ENCODE measurements at regions of chr1 and their contacts with region 1.

Region 1: DNA sequence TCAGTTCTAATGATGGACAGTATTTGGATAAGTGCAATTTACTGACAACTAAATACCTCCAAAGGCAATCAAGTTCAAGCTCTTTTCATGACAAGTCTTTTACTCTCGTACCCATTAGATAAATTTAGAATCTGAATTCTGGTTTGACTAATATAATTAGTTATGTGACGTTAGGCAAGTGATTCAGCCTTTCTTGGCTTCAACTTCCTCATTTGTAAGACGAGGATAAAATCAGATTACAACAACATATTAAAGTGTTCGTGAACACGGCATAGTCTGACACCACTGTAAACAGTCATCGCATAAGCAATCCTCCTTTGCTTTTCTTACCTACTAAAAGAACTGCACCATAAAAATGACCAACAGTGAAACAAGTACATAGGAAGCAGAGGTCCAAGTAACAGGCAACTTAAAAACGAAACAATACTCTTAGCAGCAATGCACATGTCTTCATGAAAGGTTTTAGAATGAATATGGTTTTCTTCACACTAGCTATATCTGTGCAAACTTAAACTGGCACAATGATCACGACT is 25.7 kb downstream of the COA6 start:
- DNase-seq: no peak
- ATAC-seq: peak; percentile 68
- H3K4me3 ChIP-seq: peak overlapping the region; percentile 2
- H3K4me3 Mint-ChIP-seq: peak overlapping the region; percentile 30 to 89 (median 80)
- H3K27ac ChIP-seq: peak overlapping the region; percentile 61
- H3K27ac Mint-ChIP-seq: peak overlapping the region; percentile 86 to 97 (median 92)
- H3K4me1 ChIP-seq: peaks cover 11 to 25% of the 10 kb centered on the region in 2 donors
- H3K4me1 Mint-ChIP-seq: peaks cover 41 to 79% (median 63%) of the 10 kb centered on the region in 7 donors
- H3K27me3 ChIP-seq: no peaks in the 10 kb centered on the region
- H3K27me3 Mint-ChIP-seq: no peaks in the 10 kb centered on the region

Region 2: GRCh38 chr1:233613252-233614174 is 785.4 kb before region 1 on chr1 and contains the start of gene KCNK1:
- CTCF ChIA-PET with region 1: no interaction called
- POLR2A ChIA-PET with region 1: no interaction called
- intact Hi-C with region 1: loop called in 1 of 2 experiments (anchors 10 kb)
- DNase-seq: no peak
- ATAC-seq: no peak
- H3K4me3 ChIP-seq: no peak within 1 kb of the TSS
- H3K4me3 Mint-ChIP-seq: peak within 1 kb of the TSS in 4 of 10 donors; percentile 25 to 83 (median 38)
- H3K27ac ChIP-seq: no peak within 1 kb of the TSS
- H3K27ac Mint-ChIP-seq: peak within 1 kb of the TSS in 1 of 9 donors; percentile 47
- H3K4me1 ChIP-seq: no peaks in the 10 kb centered on the region
- H3K4me1 Mint-ChIP-seq: peaks cover 0 to 12% (median 5%) of the 10 kb centered on the region in 7 donors
- H3K27me3 ChIP-seq: no peaks in the 10 kb centered on the region
- H3K27me3 Mint-ChIP-seq: peaks cover 70 to 86% (median 74%) of the 10 kb centered on the region in 5 donors
- total RNA-seq, gene KCNK1: 1.1 TPM in 1 of 5 experiments, not detected in the others

Region 3: DNA sequence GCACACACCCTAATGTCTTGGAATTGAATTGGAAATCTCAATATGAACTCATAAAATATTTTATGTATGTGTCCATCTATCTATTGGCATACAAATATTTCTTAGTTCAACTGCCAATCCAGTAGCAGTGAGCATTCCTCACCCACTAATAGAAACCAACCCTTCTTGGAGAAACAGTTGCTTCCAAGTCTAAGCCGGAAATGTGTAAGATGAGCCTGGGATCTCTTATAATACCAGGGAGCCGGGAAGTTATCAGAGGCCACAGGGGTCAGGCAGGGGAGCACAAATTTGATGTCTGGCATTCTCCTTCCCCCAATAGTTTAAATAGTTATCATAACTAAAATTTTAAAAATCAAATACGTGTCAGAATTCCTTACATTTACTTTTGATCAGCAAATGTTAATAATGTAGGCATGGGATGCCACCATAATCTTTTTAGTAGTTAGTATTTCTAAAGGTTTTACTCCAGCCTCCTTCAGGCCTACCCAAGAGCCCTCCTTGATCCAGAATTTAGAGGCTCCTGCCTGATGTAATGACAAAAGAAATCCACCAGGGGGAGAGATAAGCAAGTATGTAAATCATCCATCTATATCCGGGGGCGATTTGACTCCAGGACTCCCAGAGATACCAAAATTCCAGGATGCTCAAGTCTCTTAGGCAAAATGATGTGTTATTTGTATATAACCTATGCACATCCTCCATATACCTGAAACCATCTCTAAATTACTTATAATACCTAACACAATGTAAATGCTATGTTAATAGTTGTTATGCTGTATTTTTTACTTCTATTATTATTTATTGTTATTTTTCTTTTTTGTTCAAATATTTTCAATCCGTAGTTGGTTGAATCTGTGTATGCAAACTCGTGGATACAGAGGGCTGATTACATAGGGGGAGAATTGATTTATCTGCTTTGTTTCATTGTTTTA is 244.3 kb before region 1 on chr1:
- CTCF ChIA-PET with region 1: no interaction called
- POLR2A ChIA-PET with region 1: no interaction called
- intact Hi-C with region 1: loop called in 1 of 2 experiments (anchors 10 kb)
- DNase-seq: peak in 6 of 9 donors; percentile 7 to 54 (median 46)
- ATAC-seq: peak; percentile 31
- H3K4me3 ChIP-seq: no peak overlapping the region
- H3K4me3 Mint-ChIP-seq: no peak overlapping the region
- H3K27ac ChIP-seq: no peak overlapping the region
- H3K27ac Mint-ChIP-seq: no peak overlapping the region
- H3K4me1 ChIP-seq: no peaks in the 10 kb centered on the region
- H3K4me1 Mint-ChIP-seq: no peaks in the 10 kb centered on the region
- H3K27me3 ChIP-seq: no peaks in the 10 kb centered on the region
- H3K27me3 Mint-ChIP-seq: peaks cover 4 to 25% (median 14%) of the 10 kb centered on the region in 5 donors

Region 4: DNA sequence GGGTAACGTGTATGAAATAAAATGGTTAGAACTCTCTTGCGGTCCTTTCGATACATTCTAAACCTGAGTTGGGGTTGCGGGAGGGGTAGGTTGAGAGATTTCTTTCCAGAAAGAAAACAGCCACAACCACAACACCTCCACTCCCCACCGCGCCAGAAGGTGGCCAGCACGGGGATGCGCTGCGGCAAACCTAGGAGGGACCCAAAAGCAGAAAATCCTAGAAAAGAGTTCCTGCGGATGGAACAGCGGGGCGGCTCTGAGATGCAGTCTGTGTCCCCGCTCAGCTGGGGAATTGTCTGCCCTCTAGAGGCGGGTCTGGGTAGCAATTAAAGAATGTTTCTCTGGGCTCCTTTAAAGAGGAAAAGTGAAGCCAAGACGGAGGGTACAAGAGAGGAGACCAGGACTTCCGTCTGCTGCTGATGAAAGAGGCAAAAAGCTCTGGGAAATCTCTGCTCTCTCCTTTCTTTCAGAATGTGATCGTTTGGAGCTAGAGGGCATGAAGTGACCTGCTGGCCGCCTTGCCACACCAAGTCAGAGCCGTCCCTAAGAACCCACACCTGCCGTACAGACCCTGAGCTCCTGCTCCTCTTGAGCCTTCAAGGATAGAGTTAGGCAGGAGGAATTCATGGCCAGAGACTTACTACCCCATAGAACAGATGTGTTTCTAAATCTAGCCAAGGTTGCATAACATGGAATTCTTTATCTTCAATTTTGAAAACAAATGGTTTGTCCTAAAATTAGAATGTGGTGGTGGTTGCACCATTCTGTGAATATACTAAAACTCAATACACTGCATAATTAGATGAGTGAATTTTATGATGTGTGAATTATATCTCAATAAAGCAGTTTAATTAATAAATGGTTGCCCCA is 72.2 kb before region 1 on chr1:
- CTCF ChIA-PET with region 1: interaction called, 5 read pairs
- POLR2A ChIA-PET with region 1: interaction called, 3 read pairs
- intact Hi-C with region 1: loop called (anchors 2 kb)
- DNase-seq: peak; percentile 32 to 79 (median 67)
- ATAC-seq: peak; percentile 92
- H3K4me3 ChIP-seq: peak overlapping the region; percentile 64
- H3K4me3 Mint-ChIP-seq: peak overlapping the region; percentile 76 to 94 (median 90)
- H3K27ac ChIP-seq: peak overlapping the region; percentile 67
- H3K27ac Mint-ChIP-seq: peak overlapping the region; percentile 41 to 99 (median 85)
- H3K4me1 ChIP-seq: peaks cover 0 to 4% of the 10 kb centered on the region in 2 donors
- H3K4me1 Mint-ChIP-seq: peaks cover 23 to 36% (median 30%) of the 10 kb centered on the region in 7 donors
- H3K27me3 ChIP-seq: no peaks in the 10 kb centered on the region
- H3K27me3 Mint-ChIP-seq: peaks cover 4 to 23% (median 12%) of the 10 kb centered on the region in 5 donors

Region 5: GRCh38 chr1:234386122-234386521 is 12.8 kb before region 1 on chr1:
- CTCF ChIA-PET with region 1: no interaction called
- POLR2A ChIA-PET with region 1: interaction called, 69 read pairs
- intact Hi-C with region 1: loop called in 1 of 2 experiments (anchors 2 kb)
- DNase-seq: no peak
- ATAC-seq: no peak
- H3K4me3 ChIP-seq: no peak overlapping the region
- H3K4me3 Mint-ChIP-seq: peak overlapping the region in 1 of 10 donors; percentile 35
- H3K27ac ChIP-seq: no peak overlapping the region
- H3K27ac Mint-ChIP-seq: peak overlapping the region in 5 of 9 donors; percentile 12 to 55 (median 38)
- H3K4me1 ChIP-seq: no peaks in the 10 kb centered on the region
- H3K4me1 Mint-ChIP-seq: peaks cover 6 to 21% (median 13%) of the 10 kb centered on the region in 7 donors
- H3K27me3 ChIP-seq: no peaks in the 10 kb centered on the region
- H3K27me3 Mint-ChIP-seq: no peaks in the 10 kb centered on the region

Region 6: DNA sequence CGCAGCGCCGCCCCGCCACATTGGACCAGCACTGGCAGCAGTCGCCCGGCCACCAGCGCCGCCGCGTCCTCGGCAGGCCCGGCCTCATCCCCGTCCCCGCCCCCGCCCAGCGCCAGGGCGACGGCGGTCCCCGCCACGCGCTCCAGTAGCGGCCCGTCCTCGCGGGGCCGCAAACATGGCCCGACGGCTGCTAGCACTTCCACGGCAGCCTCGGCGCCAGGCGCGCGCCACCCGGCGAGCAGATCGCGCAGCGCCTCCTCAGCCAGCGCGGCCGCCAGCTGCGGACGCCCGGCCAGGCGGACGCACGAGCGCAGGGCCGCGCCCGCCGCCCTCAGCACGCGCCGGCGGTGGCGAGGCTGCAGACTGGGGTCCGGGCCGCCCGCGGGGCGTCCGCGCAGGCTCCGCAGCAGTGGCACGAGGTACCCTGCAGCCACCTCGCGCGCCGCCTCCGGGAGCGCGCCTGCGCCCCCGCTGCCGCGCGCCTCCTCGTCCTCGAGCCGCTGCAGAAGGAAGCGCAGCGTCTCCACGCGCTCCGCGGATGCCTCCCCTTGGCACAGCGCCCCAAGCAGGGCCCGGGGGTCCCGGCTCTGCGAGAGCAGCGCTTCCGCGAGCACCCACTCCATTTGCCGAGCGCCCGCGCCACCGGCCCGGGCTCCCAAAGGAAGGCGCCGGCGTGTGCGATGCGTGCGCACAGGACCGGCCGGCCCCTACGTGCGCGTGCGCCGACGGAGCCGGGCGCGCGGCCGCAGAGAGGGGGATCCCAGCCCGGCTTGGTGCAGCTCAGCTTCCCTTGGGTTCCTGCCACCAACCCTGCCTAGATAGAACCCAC is 79.8 kb after region 1 on chr1 and contains the start of gene TARBP1:
- CTCF ChIA-PET with region 1: no interaction called
- POLR2A ChIA-PET with region 1: no interaction called
- intact Hi-C with region 1: loop called in 1 of 2 experiments (anchors 2 kb)
- DNase-seq: peak; percentile 68 to 87 (median 83)
- ATAC-seq: peak; percentile 82
- H3K4me3 ChIP-seq: peak within 1 kb of the TSS; percentile 79
- H3K4me3 Mint-ChIP-seq: peak within 1 kb of the TSS; percentile 82 to 90 (median 90)
- H3K27ac ChIP-seq: peak within 1 kb of the TSS; percentile 75
- H3K27ac Mint-ChIP-seq: peak within 1 kb of the TSS; percentile 73 to 95 (median 85)
- H3K4me1 ChIP-seq: peaks cover 0 to 16% of the 10 kb centered on the region in 2 donors
- H3K4me1 Mint-ChIP-seq: peaks cover 14 to 44% (median 39%) of the 10 kb centered on the region in 7 donors
- H3K27me3 ChIP-seq: no peaks in the 10 kb centered on the region
- H3K27me3 Mint-ChIP-seq: peaks cover 0 to 19% (median 3%) of the 10 kb centered on the region in 5 donors
- total RNA-seq, gene TARBP1: 45.8 to 49.6 (median 47.5) TPM

Region 7: DNA sequence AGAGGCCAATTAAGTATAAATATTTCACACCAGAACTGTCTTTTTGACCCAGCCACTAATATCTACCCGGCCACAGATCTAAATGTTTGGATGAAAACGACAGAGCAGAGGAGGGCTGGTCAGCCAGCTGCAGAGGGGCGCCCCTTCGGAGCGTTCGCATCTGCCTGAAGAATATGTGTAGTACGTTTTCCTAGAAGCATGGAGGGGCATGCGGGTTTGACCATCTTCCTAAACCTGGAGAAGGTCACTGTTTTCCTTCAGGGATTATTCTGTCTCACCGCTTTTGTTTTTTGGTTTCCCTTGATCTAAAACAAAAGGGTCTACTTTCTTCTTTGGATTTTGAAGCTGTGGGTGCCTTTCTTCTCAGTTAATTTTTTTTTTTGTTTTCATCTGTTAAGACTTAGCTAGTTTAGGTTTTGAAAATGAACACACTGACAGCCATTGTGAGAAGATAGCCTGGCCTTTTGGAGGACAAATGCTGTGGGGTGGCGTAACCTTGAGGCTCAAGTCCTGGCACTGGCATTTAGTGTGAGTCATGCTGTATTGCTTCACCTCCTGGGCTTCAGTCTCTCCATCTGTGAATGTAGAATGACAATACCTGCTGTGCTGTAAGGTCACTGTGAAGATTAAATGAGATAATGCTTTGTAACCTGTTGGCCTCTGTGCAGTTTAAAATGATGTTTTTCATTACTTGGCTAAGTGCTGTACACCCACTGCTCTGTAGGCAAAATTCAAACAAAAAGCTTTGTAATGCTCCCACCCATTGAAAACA is 285.1 kb after region 1 on chr1:
- CTCF ChIA-PET with region 1: no interaction called
- POLR2A ChIA-PET with region 1: no interaction called
- intact Hi-C with region 1: no loop called
- DNase-seq: no peak
- ATAC-seq: peak; percentile 79
- H3K4me3 ChIP-seq: no peak overlapping the region
- H3K4me3 Mint-ChIP-seq: no peak overlapping the region
- H3K27ac ChIP-seq: no peak overlapping the region
- H3K27ac Mint-ChIP-seq: peak overlapping the region in 1 of 9 donors; percentile 10
- H3K4me1 ChIP-seq: no peaks in the 10 kb centered on the region
- H3K4me1 Mint-ChIP-seq: no peaks in the 10 kb centered on the region
- H3K27me3 ChIP-seq: no peaks in the 10 kb centered on the region
- H3K27me3 Mint-ChIP-seq: peaks cover 0 to 6% (median 0%) of the 10 kb centered on the region in 5 donors